ENCODE measurements at regions of chr2 and their contacts with region 1.

Region 1: DNA sequence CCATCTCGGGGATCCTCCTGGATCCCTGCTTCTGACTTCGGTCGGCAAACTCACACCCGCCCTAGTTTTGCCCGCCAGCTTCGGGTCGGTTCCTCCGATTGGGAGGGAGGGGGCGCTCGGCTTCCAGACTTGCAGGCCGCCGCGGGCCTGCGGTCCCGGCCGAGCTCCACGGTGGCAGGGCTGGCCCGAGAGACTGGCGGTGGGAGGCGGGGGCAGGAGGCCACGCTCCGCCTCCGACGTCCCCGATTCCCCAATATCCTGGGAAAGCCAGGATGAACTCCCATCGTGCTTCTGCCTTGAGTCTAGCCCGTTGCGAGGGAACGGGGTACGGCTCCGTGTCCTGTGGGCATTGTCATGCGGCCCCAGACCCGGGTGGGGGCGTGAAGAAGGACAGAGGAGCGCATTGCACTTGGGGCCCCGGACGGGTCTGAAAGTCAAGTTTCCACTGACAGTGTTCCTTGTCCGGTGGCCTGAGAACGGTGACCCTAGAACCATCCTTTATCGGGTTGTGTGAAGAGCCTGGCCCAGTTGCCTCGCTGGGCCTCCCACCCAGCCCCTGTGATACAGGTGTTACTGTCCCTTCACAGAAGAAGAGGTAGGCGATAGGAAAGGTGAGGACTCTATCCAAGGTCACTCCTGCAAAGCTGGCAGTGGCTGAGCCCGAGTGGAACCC is 2.4 kb upstream of the INHBB start:
- DNase-seq: peak in 1 of 2 donors; percentile 87
- H3K4me3 ChIP-seq: peak overlapping the region; percentile 69 to 75
- H3K27ac ChIP-seq: no peak overlapping the region
- H3K4me1 ChIP-seq: peaks cover 21 to 31% of the 10 kb centered on the region in 2 donors
- H3K27me3 ChIP-seq: peaks cover 17% of the 10 kb centered on the region
- CTCF ChIP-seq: peak; percentile 78 to 95 (median 94)

Region 2: DNA sequence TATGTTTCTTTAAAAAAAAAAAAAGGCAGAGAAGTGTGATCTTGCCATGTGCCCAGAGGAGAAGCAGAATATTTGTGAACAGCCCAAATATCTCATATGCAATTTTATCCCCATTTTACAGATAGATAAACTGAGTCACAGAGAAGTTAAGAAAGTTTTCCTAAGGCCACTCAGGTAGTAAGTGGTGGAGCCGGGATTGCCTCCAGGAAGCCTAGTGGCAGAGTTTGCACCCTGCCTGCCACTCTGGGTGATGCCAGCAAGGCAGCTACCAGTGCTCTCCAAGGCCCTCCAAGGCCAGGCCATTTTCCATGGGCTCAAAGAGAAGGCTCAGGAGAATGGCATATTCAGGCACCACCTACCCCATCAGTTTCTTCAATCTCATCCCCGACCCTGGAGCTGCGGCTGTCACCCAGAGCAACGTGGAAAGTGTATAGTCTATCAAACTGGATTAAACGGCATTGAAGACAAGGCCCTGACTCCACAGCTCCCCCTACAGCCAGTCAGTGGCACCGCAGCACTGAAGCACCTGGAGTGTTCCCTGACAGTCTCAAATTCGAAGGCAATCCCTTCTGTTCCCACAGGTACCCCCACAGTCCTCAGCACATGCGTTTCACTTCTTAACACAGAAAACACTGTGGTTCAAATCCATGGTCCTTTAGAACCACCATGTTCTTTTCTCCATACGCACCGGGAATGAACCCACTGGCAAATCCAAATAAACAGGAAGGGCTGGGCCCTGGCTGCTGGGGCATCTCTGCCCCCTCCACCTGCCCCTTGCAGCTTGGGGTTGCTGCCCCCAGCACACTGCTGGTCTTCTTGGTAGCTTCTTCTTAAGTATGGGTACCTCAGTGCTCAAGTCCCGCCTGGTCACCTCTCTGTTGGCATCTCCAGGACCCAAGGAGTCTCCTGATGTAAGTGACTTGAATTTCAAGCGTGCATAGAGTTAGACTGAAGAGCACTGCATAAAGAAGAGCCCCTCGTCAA is 177.7 kb after region 1 on chr2:
- intact Hi-C with region 1: loop called (anchors 5 kb)
- DNase-seq: no peak
- H3K4me3 ChIP-seq: no peak overlapping the region
- H3K27ac ChIP-seq: no peak overlapping the region
- H3K4me1 ChIP-seq: no peaks in the 10 kb centered on the region
- H3K27me3 ChIP-seq: no peaks in the 10 kb centered on the region
- CTCF ChIP-seq: peak; percentile 57 to 71 (median 67)

Region 3: DNA sequence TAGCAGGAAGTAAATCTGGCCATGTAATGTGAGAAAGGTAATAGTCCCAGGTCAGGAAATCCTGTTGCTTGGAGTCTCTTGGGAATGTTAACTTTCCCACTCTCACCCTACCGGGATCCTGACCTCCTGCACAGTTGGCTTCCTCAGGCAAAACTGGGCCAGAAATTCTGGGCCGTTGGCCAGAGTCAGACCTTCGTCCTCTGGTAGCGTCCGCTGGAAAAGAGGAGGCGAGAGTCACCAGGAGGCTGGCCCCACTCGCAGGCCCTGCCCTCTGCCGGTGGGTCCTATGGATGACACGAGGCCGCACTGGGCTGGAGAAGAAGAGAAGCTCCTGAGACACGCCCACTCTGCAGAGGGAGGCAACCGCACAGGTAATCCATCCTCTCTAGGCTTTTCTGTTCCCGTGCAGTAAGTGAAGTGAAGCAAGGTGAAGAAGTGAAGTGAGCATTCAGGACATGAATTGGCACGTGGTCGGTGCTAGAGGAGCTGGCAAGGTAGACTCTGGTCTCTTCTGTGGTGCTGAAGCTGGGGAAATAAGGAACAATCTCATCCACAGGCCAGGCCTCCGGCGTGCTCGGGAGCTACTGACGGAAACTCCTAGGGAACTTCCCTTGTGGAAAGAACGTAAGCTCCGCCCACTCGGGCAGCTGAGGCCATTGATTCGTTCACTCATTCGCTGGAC is 209.4 kb after region 1 on chr2:
- intact Hi-C with region 1: loop called (anchors 1 kb)
- DNase-seq: peak; percentile 43 to 91
- H3K4me3 ChIP-seq: no peak overlapping the region
- H3K27ac ChIP-seq: peak overlapping the region in 1 of 2 donors; percentile 46
- H3K4me1 ChIP-seq: peaks cover 11 to 21% of the 10 kb centered on the region in 2 donors
- H3K27me3 ChIP-seq: no peaks in the 10 kb centered on the region
- CTCF ChIP-seq: peak; percentile 64 to 84 (median 76)

Region 4: DNA sequence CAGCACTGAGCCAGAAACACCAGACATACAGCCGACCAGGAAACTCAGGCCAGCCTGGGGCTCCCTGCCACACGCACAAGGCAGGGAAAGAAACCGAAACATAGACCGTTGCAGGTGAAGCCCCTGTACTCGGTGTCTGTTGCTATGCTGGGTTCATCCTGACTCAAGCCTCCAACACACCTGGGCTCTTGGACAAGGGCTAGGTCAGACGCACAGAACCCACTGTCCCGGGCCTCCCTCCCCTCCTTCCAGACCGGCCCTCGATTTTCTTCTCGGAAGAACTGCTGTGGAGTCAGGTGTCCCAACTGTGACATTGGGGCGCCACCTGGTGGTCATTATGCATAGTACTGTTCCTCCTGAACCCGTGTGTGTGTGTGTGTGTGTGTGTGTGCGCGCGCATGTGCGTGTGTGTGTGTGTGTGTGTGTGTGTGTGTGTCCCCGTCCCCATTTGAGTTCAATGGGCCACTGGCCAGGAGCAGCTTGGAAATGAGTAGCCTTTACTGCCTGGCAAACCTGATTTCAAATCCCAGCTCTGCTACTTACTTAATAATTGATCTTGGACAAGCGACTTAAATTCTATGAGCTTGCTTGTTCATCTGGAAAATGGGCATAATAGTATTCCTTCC is 336.7 kb after region 1 on chr2:
- intact Hi-C with region 1: loop called (anchors 1 kb)
- DNase-seq: peak in 1 of 2 donors; percentile 90
- H3K4me3 ChIP-seq: no peak overlapping the region
- H3K27ac ChIP-seq: no peak overlapping the region
- H3K4me1 ChIP-seq: peaks cover 0 to 5% of the 10 kb centered on the region in 2 donors
- H3K27me3 ChIP-seq: peaks cover 8% of the 10 kb centered on the region
- CTCF ChIP-seq: peak; percentile 57 to 75 (median 67)

Region 5: DNA sequence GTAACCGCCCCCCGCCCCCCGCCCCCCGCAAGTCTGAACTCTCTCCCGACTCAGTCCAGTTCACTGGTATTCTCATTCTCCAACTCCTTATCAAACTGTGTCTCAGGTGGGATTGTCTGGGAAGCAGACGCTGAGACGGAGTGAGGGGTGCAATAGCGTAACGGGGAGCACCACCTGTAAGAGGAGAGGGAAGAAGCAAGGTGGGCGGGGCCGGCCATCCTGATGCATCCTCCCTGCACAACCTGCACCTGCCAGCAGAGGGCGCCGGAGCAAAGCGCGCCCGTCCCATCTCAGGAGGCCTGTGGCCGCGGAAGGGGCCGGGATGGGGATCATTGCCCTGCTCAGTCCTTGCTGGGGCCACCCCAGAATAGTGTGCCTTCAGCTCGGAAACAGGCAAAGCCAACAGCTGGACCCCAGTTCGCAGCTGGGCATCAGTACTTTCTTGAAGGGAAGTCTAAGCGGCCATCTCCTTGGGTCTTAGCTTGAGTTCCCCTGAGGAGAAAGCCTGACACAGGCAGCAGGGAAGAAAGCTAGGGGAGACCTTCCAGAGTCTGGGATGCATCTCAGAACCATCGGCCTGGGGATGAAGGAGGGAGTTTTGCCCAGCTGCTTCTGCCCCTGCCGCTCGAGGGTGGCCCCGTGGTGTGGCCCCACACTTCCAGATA is 733.4 kb after region 1 on chr2:
- intact Hi-C with region 1: loop called (anchors 5 kb)
- DNase-seq: no peak
- H3K4me3 ChIP-seq: no peak overlapping the region
- H3K27ac ChIP-seq: no peak overlapping the region
- H3K4me1 ChIP-seq: no peaks in the 10 kb centered on the region
- H3K27me3 ChIP-seq: peaks cover 3% of the 10 kb centered on the region
- CTCF ChIP-seq: peak; percentile 38 to 79 (median 65)

Measured in ascending aorta (tissue), 2 donors.